Gastrocnemius medialis (tissue), 4 donors: ENCODE measurements at regions of chr1 and their contacts with region 1.

Region 1: GRCh38 chr1:244864253-244865027 is at the start of gene HNRNPU:
- DNase-seq: peak; percentile 92 to 97
- ATAC-seq: peak; percentile 66 to 72
- H3K4me3 ChIP-seq: peak within 1 kb of the TSS; percentile 82 to 92 (median 86)
- H3K27ac ChIP-seq: peak within 1 kb of the TSS; percentile 93 to 100 (median 100)
- H3K4me1 ChIP-seq: peaks cover 42 to 44% of the 10 kb centered on the region in 2 donors
- H3K27me3 ChIP-seq: no peaks in the 10 kb centered on the region
- CTCF ChIP-seq: peak; percentile 16 to 71 (median 47)
- POLR2A ChIP-seq: peak; percentile 99
- total RNA-seq, gene HNRNPU: 167 to 243 (median 207) TPM

Region 2: GRCh38 chr1:243255791-243256512 is 1608.5 kb before region 1 on chr1 and contains the start of gene SDCCAG8:
- in situ Hi-C with region 1: loop called in 1 of 4 experiments (anchors 25 kb)
- intact Hi-C with region 1: loop called (anchors 10 kb)
- DNase-seq: peak; percentile 99
- ATAC-seq: peak; percentile 86
- H3K4me3 ChIP-seq: peak within 1 kb of the TSS; percentile 78 to 95 (median 79)
- H3K27ac ChIP-seq: peak within 1 kb of the TSS; percentile 87 to 97 (median 96)
- H3K4me1 ChIP-seq: peaks cover 47 to 49% of the 10 kb centered on the region in 2 donors
- H3K27me3 ChIP-seq: no peaks in the 10 kb centered on the region
- CTCF ChIP-seq: no peak
- POLR2A ChIP-seq: peak; percentile 91 to 94
- total RNA-seq, gene SDCCAG8: 12.3 to 33.9 (median 26.1) TPM

Region 3: GRCh38 chr1:244835276-244836134 is 28.9 kb before region 1 on chr1 and contains the start of gene COX20:
- in situ Hi-C with region 1: no loop called
- intact Hi-C with region 1: loop called (anchors 1 kb)
- DNase-seq: peak; percentile 74 to 88
- ATAC-seq: peak; percentile 70 to 80
- H3K4me3 ChIP-seq: peak within 1 kb of the TSS; percentile 68 to 81 (median 76)
- H3K27ac ChIP-seq: peak within 1 kb of the TSS; percentile 96 to 99 (median 99)
- H3K4me1 ChIP-seq: peaks cover 11 to 33% of the 10 kb centered on the region in 2 donors
- H3K27me3 ChIP-seq: no peaks in the 10 kb centered on the region
- CTCF ChIP-seq: peak in 1 of 5 experiments; percentile 14
- POLR2A ChIP-seq: peak; percentile 65 to 66
- total RNA-seq, gene COX20: 22.7 to 72.0 (median 35.4) TPM

Region 4: GRCh38 chr1:244918421-244919319 is 54.2 kb after region 1 on chr1:
- in situ Hi-C with region 1: no loop called
- intact Hi-C with region 1: loop called (anchors 1 kb)
- DNase-seq: peak; percentile 64 to 86
- ATAC-seq: peak; percentile 69 to 79
- H3K4me3 ChIP-seq: peak overlapping the region; percentile 56 to 70 (median 63)
- H3K27ac ChIP-seq: peak overlapping the region; percentile 88 to 96 (median 92)
- H3K4me1 ChIP-seq: peaks cover 32 to 37% of the 10 kb centered on the region in 2 donors
- H3K27me3 ChIP-seq: no peaks in the 10 kb centered on the region
- CTCF ChIP-seq: peak in 3 of 5 experiments; percentile 12 to 51 (median 21)
- POLR2A ChIP-seq: peak; percentile 78 to 79

Region 5: GRCh38 chr1:245045087-245045881 is 180.8 kb after region 1 on chr1:
- in situ Hi-C with region 1: no loop called
- intact Hi-C with region 1: loop called (anchors 2 kb)
- DNase-seq: peak in 1 of 2 donors; percentile 57
- ATAC-seq: peak in 1 of 2 donors; percentile 73
- H3K4me3 ChIP-seq: no peak overlapping the region
- H3K27ac ChIP-seq: no peak overlapping the region
- H3K4me1 ChIP-seq: no peaks in the 10 kb centered on the region
- H3K27me3 ChIP-seq: no peaks in the 10 kb centered on the region
- CTCF ChIP-seq: no peak
- POLR2A ChIP-seq: no peak